ENCODE measurements at regions of chr3 and their contacts with region 1.

Region 1: DNA sequence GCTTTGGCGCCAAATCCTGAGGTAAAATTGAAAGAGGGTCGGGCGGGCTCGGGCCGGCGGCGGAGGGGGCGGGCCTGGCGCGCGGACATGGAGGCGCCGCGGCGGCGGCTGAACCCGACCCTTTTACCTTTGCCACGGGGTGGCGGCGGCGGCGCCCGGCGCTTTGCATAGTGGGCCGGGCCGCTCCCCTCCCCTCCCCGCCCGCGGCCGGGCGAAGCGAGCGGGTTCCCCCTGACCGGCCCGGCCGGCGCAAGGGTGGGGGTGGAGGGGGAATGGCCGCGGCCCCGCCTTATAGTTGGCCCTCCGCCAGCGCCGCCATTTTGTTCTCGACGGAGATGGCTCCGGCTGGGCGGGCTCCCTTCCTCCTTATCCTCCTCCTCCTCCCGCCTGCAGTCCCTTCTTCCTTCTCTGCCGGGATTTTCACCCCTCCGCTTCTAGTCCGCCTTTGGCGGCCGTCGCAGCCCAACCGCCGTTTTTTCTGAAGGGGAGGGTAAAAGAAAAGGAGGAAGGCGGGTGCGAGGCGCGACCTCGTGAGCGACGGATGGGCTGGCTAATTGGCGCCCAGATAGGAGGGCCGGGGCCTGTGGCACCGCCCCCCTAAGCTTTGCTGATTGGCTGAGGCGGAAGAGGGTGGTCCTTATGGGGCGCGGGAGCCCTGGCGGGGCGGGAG is 638 bp downstream of the NR2C2 start:
- DNase-seq: peak; percentile 97
- ATAC-seq: peak; percentile 92
- H3K4me3 ChIP-seq: peak overlapping the region; percentile 91
- H3K27ac ChIP-seq: peak overlapping the region; percentile 97
- H3K4me1 ChIP-seq: peaks cover 16% of the 10 kb centered on the region; the same call in 1 of the 2 replicates
- H3K27me3 ChIP-seq: no peaks in the 10 kb centered on the region
- CTCF ChIP-seq: no peak

Region 2: DNA sequence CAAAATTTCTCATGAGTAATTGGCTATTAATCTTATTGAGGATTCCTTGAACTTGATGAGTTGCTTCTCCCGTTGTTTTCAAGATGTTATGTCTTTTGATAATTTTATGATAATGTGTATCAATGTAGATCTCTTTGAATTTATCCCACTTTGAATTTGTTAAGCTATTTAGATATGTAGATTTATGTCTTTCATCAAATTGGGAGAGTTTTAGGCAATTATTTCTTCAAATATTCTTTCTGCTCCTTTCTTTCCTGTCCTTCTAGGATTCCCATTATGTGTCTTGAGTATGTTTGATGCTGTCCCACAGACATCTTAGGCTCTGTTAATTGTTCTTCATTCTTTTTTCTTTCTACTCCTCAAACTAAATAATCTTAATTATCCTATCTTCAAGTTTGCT is 197.4 kb before region 1 on chr3:
- CTCF ChIA-PET with region 1: no interaction called
- POLR2A ChIA-PET with region 1: no interaction called
- intact Hi-C with region 1: no loop called
- DNase-seq: no peak
- ATAC-seq: no peak
- H3K4me3 ChIP-seq: no peak overlapping the region
- H3K27ac ChIP-seq: no peak overlapping the region
- H3K4me1 ChIP-seq: no peaks in the 10 kb centered on the region
- H3K27me3 ChIP-seq: peaks cover 18% of the 10 kb centered on the region
- CTCF ChIP-seq: no peak

Region 3: DNA sequence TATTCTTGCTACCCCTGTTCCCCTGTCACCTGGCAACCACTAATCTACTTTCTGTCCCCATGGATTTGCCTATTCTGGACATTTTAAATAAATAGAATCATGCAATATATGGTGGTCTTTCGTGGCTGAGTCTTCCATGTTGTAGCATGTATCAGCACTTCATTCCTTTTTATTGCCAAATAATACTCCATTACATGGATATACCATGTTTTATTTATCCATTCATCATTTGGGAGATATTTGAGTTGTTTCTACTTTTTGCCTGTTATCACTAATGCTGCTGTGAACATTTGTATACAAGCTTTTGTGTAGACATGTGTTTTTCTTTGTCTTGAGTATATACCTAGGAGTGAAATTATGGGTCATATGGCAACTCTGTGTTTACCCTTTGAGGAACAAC is 49.9 kb after region 1 on chr3:
- CTCF ChIA-PET with region 1: no interaction called
- POLR2A ChIA-PET with region 1: no interaction called
- intact Hi-C with region 1: loop called (anchors 2 kb)
- DNase-seq: no peak
- ATAC-seq: no peak
- H3K4me3 ChIP-seq: no peak overlapping the region
- H3K27ac ChIP-seq: no peak overlapping the region
- H3K4me1 ChIP-seq: no peaks in the 10 kb centered on the region
- H3K27me3 ChIP-seq: no peaks in the 10 kb centered on the region
- CTCF ChIP-seq: no peak

Region 4: GRCh38 chr3:15527031-15527459 is 579.0 kb after region 1 on chr3:
- CTCF ChIA-PET with region 1: no interaction called
- POLR2A ChIA-PET with region 1: no interaction called
- intact Hi-C with region 1: no loop called
- DNase-seq: peak; percentile 7
- ATAC-seq: 0 out of 2 replicates have a peak, but pooled peaks have one; percentile 24
- H3K4me3 ChIP-seq: no peak overlapping the region
- H3K27ac ChIP-seq: no peak overlapping the region
- H3K4me1 ChIP-seq: no peaks in the 10 kb centered on the region
- H3K27me3 ChIP-seq: no peaks in the 10 kb centered on the region
- CTCF ChIP-seq: peak; percentile 36; the same call in 1 of the 2 replicates

Measured in PC-3 (cell line).